ENCODE measurements at regions of chr12 and their contacts with region 1.

Region 1: GRCh38 chr12:10364815-10365622 is 24.8 kb downstream of the KLRK1 start:
- DNase-seq: peak; percentile 20 to 83 (median 77)
- ATAC-seq: peak; percentile 86
- H3K4me3 ChIP-seq: peak overlapping the region; percentile 81
- H3K4me3 Mint-ChIP-seq: no peak overlapping the region
- H3K27ac ChIP-seq: peak overlapping the region; percentile 85
- H3K27ac Mint-ChIP-seq: no peak overlapping the region
- H3K4me1 ChIP-seq: peaks cover 21 to 47% of the 10 kb centered on the region in 2 donors
- H3K4me1 Mint-ChIP-seq: peaks cover 6 to 25% (median 13%) of the 10 kb centered on the region in 7 donors
- H3K27me3 ChIP-seq: no peaks in the 10 kb centered on the region
- H3K27me3 Mint-ChIP-seq: peaks cover 0 to 32% (median 0%) of the 10 kb centered on the region in 5 donors

Region 2: GRCh38 chr12:10153271-10154144 is 211.5 kb before region 1 on chr12:
- CTCF ChIA-PET with region 1: no interaction called
- POLR2A ChIA-PET with region 1: no interaction called
- intact Hi-C with region 1: loop called in 1 of 2 experiments (anchors 2 kb)
- DNase-seq: peak; percentile 31 to 71 (median 58)
- ATAC-seq: peak; percentile 93
- H3K4me3 ChIP-seq: peak overlapping the region; percentile 83
- H3K4me3 Mint-ChIP-seq: peak overlapping the region; percentile 89 to 96 (median 93)
- H3K27ac ChIP-seq: peak overlapping the region; percentile 55
- H3K27ac Mint-ChIP-seq: peak overlapping the region in 7 of 9 donors; percentile 58 to 91 (median 82)
- H3K4me1 ChIP-seq: peaks cover 6 to 7% of the 10 kb centered on the region in 2 donors
- H3K4me1 Mint-ChIP-seq: peaks cover 5 to 15% (median 11%) of the 10 kb centered on the region in 7 donors
- H3K27me3 ChIP-seq: peaks cover 0 to 3% of the 10 kb centered on the region in 2 donors
- H3K27me3 Mint-ChIP-seq: peaks cover 0 to 66% (median 0%) of the 10 kb centered on the region in 5 donors

Region 3: DNA sequence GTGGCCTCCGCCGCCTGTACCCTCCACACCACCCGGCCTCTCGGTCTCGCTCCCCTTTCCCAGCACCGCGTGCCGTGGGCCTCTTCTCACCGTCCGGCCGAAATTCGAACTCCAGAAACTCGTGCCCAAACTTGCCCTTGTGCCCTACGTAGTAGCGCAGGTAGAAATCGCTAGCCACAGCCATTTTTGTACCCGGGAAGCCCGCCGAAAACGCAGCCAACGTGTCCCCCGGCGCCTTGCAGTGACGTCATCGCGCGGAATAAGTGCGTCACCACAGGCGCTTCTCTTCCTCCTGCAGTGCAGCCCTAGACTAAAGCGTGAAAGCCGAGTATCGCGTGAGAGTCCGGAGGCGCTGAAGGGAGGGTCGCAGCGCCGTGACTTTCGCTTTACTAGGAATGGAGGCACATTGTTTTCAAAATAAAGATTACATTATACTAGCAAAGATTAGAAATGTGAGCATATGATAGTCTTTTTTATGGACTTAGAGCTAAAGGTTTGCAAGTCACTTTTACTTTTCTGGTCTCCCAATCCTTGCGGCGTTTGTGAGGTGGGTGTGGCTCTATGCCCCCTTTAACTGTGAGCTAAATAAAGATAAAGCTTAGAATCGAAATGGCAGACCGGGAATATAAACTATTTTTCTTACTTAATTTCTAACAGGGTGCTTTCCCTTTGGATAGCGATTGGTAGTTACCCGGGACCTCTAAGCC is 248.5 kb after region 1 on chr12 and contains the start of gene MAGOHB:
- CTCF ChIA-PET with region 1: no interaction called
- POLR2A ChIA-PET with region 1: interaction called, 5 read pairs
- intact Hi-C with region 1: loop called (anchors 1 to 2 kb)
- DNase-seq: peak; percentile 94 to 100 (median 97)
- ATAC-seq: peak; percentile 96
- H3K4me3 ChIP-seq: peak within 1 kb of the TSS; percentile 74
- H3K4me3 Mint-ChIP-seq: peak within 1 kb of the TSS; percentile 93 to 100 (median 98)
- H3K27ac ChIP-seq: peak within 1 kb of the TSS; percentile 93
- H3K27ac Mint-ChIP-seq: peak within 1 kb of the TSS; percentile 97 to 100 (median 100)
- H3K4me1 ChIP-seq: peaks cover 4 to 11% of the 10 kb centered on the region in 2 donors
- H3K4me1 Mint-ChIP-seq: peaks cover 12 to 38% (median 33%) of the 10 kb centered on the region in 7 donors
- H3K27me3 ChIP-seq: no peaks in the 10 kb centered on the region
- H3K27me3 Mint-ChIP-seq: peaks cover 0 to 26% (median 7%) of the 10 kb centered on the region in 5 donors
- total RNA-seq, gene MAGOHB: 12.1 to 43.1 (median 24.8) TPM

Region 4: GRCh38 chr12:10749700-10750384 is 384.8 kb after region 1 on chr12:
- CTCF ChIA-PET with region 1: interaction called, 3 read pairs
- POLR2A ChIA-PET with region 1: no interaction called
- intact Hi-C with region 1: loop called in 1 of 2 experiments (anchors 1 kb)
- DNase-seq: peak; percentile 22 to 79 (median 67)
- ATAC-seq: peak; percentile 100
- H3K4me3 ChIP-seq: peak overlapping the region; percentile 1
- H3K4me3 Mint-ChIP-seq: peak overlapping the region in 8 of 10 donors; percentile 15 to 76 (median 64)
- H3K27ac ChIP-seq: no peak overlapping the region
- H3K27ac Mint-ChIP-seq: peak overlapping the region in 4 of 9 donors; percentile 7 to 60 (median 34)
- H3K4me1 ChIP-seq: peaks cover 0 to 4% of the 10 kb centered on the region in 2 donors
- H3K4me1 Mint-ChIP-seq: peaks cover 0 to 24% (median 6%) of the 10 kb centered on the region in 7 donors
- H3K27me3 ChIP-seq: peaks cover 0 to 4% of the 10 kb centered on the region in 2 donors
- H3K27me3 Mint-ChIP-seq: peaks cover 32 to 57% (median 33%) of the 10 kb centered on the region in 5 donors

Region 5: DNA sequence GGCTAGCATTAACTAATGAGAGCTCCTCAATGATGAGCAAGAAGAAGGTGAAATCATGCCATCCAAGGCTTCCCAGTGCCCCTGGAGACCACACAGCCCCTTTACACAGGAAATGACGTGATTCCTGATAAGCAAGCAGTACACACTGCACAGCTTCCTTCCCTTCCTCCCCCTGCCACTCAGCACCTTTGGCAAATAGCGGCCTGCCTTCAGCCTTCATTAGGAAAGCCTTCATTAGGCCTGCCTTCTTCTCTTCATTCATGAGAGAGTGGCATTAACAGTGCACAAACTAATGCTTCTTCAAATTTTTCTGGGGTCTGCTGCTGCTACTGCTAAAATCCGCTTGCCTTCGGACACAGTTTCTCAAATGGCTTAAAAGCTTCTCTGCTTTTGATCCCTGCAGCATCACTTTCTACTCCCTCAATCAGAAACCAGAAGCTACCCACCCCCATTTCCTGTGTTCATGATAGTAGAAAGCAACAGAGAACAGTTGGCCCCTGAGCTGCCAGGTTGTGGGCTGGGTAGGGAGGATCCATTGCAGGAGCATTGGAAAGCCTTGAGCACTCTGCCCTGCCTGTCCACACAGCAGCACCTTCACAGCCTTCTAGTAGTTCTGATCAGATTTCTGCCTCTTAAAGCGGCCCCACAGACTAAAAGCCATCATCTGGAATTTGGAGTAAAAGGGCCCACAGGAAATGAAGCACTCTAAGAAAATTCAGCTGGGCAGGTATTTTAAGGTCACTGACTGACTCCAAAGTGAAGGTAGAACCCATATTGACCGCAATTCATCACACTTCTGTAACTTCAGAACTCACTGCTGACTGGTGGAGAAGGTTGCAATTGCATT is 1180.7 kb after region 1 on chr12:
- CTCF ChIA-PET with region 1: no interaction called
- POLR2A ChIA-PET with region 1: no interaction called
- intact Hi-C with region 1: loop called in 1 of 2 experiments (anchors 5 kb)
- DNase-seq: peak in 8 of 9 donors; percentile 50 to 87 (median 81)
- ATAC-seq: peak; percentile 87
- H3K4me3 ChIP-seq: peak overlapping the region; percentile 50
- H3K4me3 Mint-ChIP-seq: peak overlapping the region; percentile 74 to 84 (median 80)
- H3K27ac ChIP-seq: peak overlapping the region; percentile 81
- H3K27ac Mint-ChIP-seq: peak overlapping the region; percentile 92 to 99 (median 96)
- H3K4me1 ChIP-seq: peaks cover 28 to 69% of the 10 kb centered on the region in 2 donors
- H3K4me1 Mint-ChIP-seq: peaks cover 31 to 88% (median 68%) of the 10 kb centered on the region in 7 donors
- H3K27me3 ChIP-seq: no peaks in the 10 kb centered on the region
- H3K27me3 Mint-ChIP-seq: peaks cover 0 to 5% (median 0%) of the 10 kb centered on the region in 5 donors

Measured in naive thymus-derived CD4-positive, alpha-beta T cell (primary cell).